ENCODE measurements at regions of chr15 and their contacts with region 1.

Region 1: GRCh38 chr15:47196057-47196456 is 521.2 kb upstream of the SEMA6D start:
- DNase-seq: no peak
- H3K4me3 ChIP-seq: no peak overlapping the region
- H3K27ac ChIP-seq: no peak overlapping the region
- H3K4me1 ChIP-seq: peaks cover 0 to 9% (median 4%) of the 10 kb centered on the region in 4 donors
- H3K27me3 ChIP-seq: no peaks in the 10 kb centered on the region
- CTCF ChIP-seq: peak; percentile 79 to 82 (median 80)
- EP300 ChIP-seq: no peak
- POLR2A ChIP-seq: no peak

Region 2: DNA sequence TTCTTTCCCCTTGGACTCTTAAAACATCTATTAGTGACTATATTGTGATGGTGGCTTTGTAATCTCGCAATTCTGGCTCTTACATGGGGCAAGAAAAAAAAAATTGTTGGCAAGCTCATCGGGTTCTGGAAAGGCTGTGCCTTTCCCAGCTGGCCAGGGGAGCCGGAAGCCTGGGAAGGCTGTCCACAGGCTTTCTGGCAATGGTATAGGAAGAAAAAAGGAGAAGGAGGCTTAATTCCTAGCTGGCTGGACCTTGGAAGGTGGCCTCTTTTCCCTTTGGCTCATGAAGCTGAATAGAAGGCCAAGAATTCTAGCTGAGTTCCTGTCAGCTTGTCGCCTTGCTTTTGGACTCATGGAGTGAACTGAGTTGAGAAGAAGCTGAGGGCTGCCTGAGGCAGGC is 277.8 kb after region 1 on chr15:
- intact Hi-C with region 1: loop called (anchors 10 kb)
- DNase-seq: no peak
- H3K4me3 ChIP-seq: no peak overlapping the region
- H3K27ac ChIP-seq: peak overlapping the region in 2 of 4 donors; percentile 13 to 57
- H3K4me1 ChIP-seq: peaks cover 15 to 26% (median 18%) of the 10 kb centered on the region in 4 donors
- H3K27me3 ChIP-seq: no peaks in the 10 kb centered on the region
- CTCF ChIP-seq: no peak
- EP300 ChIP-seq: no peak
- POLR2A ChIP-seq: no peak

Region 3: DNA sequence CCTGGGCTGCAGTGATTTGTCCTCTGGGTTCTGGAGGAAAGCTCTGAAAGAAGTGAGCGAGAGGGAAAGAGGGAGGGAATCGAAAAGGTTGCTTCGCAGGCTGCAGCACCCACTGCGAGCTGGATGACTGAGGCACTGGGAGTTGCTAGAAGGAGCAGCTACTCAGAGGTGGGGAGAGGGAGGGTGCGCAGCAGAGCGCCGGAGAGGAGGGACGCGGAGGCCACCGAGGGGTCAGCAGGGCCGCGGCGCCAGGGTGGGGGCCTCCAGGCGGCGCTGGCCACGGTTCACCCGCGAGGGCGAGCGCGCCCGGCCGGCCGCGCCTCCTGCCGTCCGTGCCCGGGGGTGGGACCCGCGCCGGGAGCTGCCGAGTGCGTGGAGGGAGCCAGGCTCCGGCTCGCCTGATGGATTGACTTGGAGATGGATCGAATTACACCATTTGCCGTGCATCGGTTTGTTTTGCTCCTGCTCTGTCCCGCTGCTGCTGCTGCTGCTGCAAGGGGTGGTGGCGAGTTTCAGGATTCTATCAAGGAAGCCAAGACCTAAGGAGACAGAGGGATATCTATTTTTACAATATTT is 521.1 kb after region 1 on chr15 and contains the start of gene SEMA6D:
- intact Hi-C with region 1: loop called (anchors 10 kb)
- DNase-seq: no peak
- H3K4me3 ChIP-seq: peak within 1 kb of the TSS; percentile 61 to 81 (median 70)
- H3K27ac ChIP-seq: peak within 1 kb of the TSS; percentile 64 to 89 (median 82)
- H3K4me1 ChIP-seq: peaks cover 22 to 60% (median 45%) of the 10 kb centered on the region in 4 donors
- H3K27me3 ChIP-seq: peaks cover 0 to 7% (median 0%) of the 10 kb centered on the region in 4 donors
- CTCF ChIP-seq: peak; percentile 27 to 48 (median 30)
- EP300 ChIP-seq: no peak
- POLR2A ChIP-seq: no peak
- total RNA-seq, gene SEMA6D: 2.1 to 5.2 (median 3.8) TPM

Region 4: DNA sequence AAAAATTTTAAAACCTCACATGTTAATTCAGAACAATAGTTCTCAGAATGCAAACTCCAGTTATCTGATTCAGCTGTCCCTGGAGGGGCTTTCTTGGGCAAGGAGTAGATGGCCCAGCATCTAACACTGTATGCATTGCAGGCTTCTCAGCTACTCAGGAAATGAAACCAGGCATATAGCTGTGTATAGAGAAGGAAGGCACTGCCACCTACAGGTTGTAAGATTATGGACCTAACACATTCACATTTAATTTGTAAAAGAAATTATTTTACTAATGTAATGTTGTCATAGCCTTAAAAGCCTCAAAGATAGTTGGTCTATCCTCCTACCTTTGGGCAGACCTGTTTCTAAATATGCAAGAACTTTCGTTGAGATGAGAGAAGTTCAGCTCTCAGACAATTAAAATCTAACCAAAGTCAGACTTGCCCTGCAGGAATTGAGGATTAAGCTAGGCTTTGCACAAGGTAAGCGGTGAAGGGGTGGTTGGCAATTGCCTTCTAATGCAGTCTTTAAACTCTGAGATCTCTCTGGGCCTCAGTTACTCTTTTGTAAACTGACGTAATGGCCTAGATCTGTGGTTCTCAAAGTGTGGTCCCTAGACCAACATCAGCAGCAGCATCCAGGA is 792.0 kb after region 1 on chr15:
- intact Hi-C with region 1: loop called (anchors 2 kb)
- DNase-seq: no peak
- H3K4me3 ChIP-seq: no peak overlapping the region
- H3K27ac ChIP-seq: no peak overlapping the region
- H3K4me1 ChIP-seq: peaks cover 0 to 7% (median 2%) of the 10 kb centered on the region in 4 donors
- H3K27me3 ChIP-seq: no peaks in the 10 kb centered on the region
- CTCF ChIP-seq: peak; percentile 68 to 73 (median 70)
- EP300 ChIP-seq: no peak
- POLR2A ChIP-seq: no peak

Region 5: GRCh38 chr15:48250640-48251076 is 1054.6 kb after region 1 on chr15:
- intact Hi-C with region 1: loop called (anchors 10 kb)
- DNase-seq: no peak
- H3K4me3 ChIP-seq: no peak overlapping the region
- H3K27ac ChIP-seq: no peak overlapping the region
- H3K4me1 ChIP-seq: no peaks in the 10 kb centered on the region
- H3K27me3 ChIP-seq: no peaks in the 10 kb centered on the region
- CTCF ChIP-seq: peak; percentile 54 to 69 (median 67)
- EP300 ChIP-seq: no peak
- POLR2A ChIP-seq: no peak

Region 6: DNA sequence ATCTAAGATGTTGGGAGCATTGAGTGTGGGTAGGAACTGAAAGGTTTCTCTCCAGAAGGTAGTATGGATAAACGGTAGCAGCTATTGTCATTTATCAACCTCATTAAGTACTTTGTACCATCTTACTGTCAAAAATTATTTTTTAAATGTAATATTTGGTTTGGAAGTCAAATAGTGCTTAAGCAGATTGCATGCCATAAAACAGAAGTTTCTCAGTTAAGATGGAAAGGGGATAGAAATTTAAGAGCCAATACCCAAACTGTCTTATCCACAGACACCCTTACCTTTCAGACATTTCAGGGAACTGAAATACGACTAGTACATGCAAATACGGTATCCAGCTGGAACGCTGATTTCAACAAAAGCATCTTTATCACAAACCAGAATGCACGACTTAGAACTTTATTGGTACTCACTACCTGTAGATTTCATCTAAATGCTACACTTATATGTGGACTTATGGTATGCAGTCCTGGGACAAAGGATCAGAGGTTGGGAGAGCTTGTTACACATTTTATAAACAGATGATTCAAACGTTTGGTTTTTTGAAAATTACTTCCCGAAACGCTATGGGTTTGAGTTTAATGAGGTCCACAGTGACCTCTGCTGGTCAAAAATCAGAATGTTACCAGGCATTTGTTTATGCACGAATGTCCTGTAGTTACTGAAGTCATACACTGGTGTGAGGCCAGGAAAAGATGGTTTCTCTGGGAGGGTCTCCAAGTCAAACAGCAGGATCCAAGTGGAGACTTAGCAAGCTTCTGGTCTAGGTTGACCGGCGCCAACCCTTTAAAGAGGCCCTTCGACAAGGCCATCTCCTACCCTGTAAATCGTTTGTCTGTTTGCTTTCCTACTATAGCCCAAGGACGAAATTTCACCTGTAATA is 1089.5 kb after region 1 on chr15:
- intact Hi-C with region 1: loop called (anchors 5 kb)
- DNase-seq: no peak
- H3K4me3 ChIP-seq: peak overlapping the region; percentile 16 to 45 (median 30)
- H3K27ac ChIP-seq: peak overlapping the region in 1 of 4 donors; percentile 32
- H3K4me1 ChIP-seq: peaks cover 12 to 37% (median 34%) of the 10 kb centered on the region in 4 donors
- H3K27me3 ChIP-seq: no peaks in the 10 kb centered on the region
- CTCF ChIP-seq: peak; percentile 68 to 78 (median 76)
- EP300 ChIP-seq: no peak
- POLR2A ChIP-seq: no peak